Panc1 (cell line): ENCODE measurements at regions of chr19 and their contacts with region 1.

Region 1: DNA sequence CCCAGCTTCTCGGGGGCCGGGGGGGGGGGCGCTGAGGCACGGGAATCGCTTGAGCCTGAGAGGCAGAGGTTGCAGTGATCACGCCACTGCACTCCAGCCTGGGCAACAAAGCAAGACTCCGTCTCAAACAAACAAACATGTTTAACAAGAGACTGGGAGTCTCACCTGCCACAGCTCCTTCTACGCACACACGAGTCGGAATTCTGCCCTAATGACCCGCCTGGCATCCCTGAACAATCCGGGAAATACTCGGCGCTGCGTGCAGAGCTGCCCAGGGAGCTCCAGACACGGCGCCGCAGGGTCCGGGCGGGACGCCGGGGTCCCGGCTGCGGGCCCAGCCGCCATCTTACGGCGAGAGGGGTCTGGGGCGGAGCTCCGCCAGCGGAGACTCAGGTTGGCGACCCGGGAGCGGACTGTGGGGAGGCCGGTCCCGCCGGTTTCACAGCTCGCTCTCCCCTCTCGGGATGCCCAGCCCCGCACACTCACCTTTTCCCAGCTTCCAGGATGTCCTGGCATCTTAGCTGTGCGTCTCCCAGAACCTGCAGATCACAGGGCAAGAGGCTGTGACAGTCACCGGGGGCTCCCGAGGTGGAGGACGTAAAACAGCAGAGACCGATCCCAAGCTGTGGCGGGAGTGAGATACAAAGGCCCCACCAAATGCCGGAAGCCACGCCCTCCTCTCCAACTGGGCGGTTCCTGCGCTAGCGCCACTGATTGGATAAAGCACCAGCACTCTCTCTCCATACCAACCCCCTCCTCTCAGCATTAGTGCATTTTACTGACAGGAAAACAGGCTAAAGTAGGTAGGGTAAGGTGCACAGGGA is 23.6 kb upstream of the ZNF724 start:
- DNase-seq: peak; percentile 59
- ATAC-seq: peak; percentile 100
- H3K4me3 ChIP-seq: peak overlapping the region; percentile 81 to 84
- H3K27ac ChIP-seq: peak overlapping the region; percentile 71
- H3K4me1 ChIP-seq: peaks cover 3% of the 10 kb centered on the region; the same call in 1 of the 2 replicates
- H3K27me3 ChIP-seq: no peaks in the 10 kb centered on the region
- CTCF ChIP-seq: no peak

Region 2: DNA sequence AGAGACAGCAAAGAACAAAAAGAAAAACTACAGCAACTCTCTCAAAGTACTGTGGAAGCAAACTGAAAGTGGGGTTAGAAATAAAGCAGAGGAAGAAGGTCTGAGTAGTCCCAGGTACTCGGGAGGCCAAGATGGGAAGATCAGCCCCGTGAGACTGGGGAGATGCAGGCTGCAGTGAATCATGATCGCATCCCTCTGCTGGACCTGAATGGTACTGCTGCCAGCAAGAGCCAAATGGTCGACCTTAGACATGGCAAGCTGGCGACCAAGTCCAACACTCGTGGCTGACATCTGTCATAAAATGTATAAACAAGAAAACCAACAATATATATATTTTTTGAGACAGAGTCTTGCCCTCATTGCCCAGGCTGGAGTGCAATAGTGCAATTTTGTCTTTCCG is 10.1 kb after region 1 on chr19:
- CTCF ChIA-PET with region 1: interaction called, 13 read pairs
- POLR2A ChIA-PET with region 1: no interaction called
- in situ Hi-C with region 1: no loop called
- intact Hi-C with region 1: no loop called
- DNase-seq: no peak
- ATAC-seq: peak; percentile 83
- H3K4me3 ChIP-seq: no peak overlapping the region
- H3K27ac ChIP-seq: no peak overlapping the region
- H3K4me1 ChIP-seq: no peaks in the 10 kb centered on the region
- H3K27me3 ChIP-seq: no peaks in the 10 kb centered on the region
- CTCF ChIP-seq: peak; percentile 72

Region 3: GRCh38 chr19:23512130-23512919 is 238.5 kb after region 1 on chr19:
- CTCF ChIA-PET with region 1: no interaction called
- POLR2A ChIA-PET with region 1: no interaction called
- in situ Hi-C with region 1: no loop called
- intact Hi-C with region 1: no loop called
- DNase-seq: no peak
- ATAC-seq: no peak
- H3K4me3 ChIP-seq: no peak overlapping the region
- H3K27ac ChIP-seq: no peak overlapping the region
- H3K4me1 ChIP-seq: no peaks in the 10 kb centered on the region
- H3K27me3 ChIP-seq: no peaks in the 10 kb centered on the region
- CTCF ChIP-seq: no peak